ENCODE measurements at regions of chr10 and their contacts with region 1.

Region 1: GRCh38 chr10:80459047-80459931 is 5.2 kb downstream of the TSPAN14 start:
- DNase-seq: peak; percentile 90
- ATAC-seq: peak; percentile 60
- H3K4me3 Mint-ChIP-seq: peak overlapping the region; percentile 86
- H3K27ac Mint-ChIP-seq: peak overlapping the region; percentile 95
- H3K4me1 Mint-ChIP-seq: peaks cover 78% of the 10 kb centered on the region
- H3K27me3 Mint-ChIP-seq: no peaks in the 10 kb centered on the region
- CTCF ChIP-seq: no peak

Region 2: DNA sequence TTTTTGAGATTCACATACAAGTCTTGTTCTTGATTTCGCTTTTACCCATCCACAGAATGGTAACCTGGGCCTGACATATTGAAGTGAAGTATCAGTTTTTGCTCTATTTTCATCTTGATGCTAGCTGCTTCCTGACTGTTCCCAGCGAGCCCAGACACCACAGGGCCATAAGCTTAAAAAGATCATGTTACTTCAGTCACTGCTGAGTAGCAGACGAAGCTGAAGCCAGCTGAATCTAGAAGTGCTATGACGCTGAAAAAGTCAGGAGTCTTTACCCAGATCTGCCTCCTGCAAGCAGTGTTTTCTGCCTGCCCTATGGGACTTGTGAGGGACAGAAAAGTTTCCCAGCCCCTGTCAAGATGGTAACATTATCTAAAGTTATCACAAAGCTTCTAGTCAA is 53.7 kb before region 1 on chr10:
- CTCF ChIA-PET with region 1: no interaction called
- POLR2A ChIA-PET with region 1: no interaction called
- intact Hi-C with region 1: no loop called
- DNase-seq: no peak
- ATAC-seq: no peak
- H3K4me3 Mint-ChIP-seq: no peak overlapping the region
- H3K27ac Mint-ChIP-seq: no peak overlapping the region
- H3K4me1 Mint-ChIP-seq: peaks cover 11% of the 10 kb centered on the region
- H3K27me3 Mint-ChIP-seq: peaks cover 3% of the 10 kb centered on the region
- CTCF ChIP-seq: no peak

Region 3: DNA sequence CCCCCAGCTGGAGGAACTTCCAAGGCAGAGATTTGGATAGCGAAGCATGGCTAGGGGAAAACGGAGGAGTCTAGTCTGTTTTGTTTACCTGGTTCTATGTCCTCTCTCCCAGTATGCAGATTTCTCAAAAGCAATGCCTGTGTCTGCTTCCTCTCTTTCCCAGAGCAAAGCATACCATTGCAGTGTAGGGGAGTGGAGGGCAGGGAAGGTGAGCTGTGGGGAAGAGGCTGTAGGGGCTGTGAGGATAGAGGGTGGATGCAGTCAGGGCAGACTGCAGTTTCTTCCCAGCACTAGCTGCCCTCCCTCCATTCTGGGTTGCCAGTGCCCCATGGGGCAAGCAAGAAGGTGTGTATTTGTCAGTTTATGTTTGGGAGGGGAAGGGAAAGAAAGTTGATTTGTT is 22.1 kb before region 1 on chr10:
- CTCF ChIA-PET with region 1: no interaction called
- POLR2A ChIA-PET with region 1: no interaction called
- intact Hi-C with region 1: no loop called
- DNase-seq: no peak
- ATAC-seq: no peak
- H3K4me3 Mint-ChIP-seq: no peak overlapping the region
- H3K27ac Mint-ChIP-seq: no peak overlapping the region
- H3K4me1 Mint-ChIP-seq: no peaks in the 10 kb centered on the region
- H3K27me3 Mint-ChIP-seq: no peaks in the 10 kb centered on the region
- CTCF ChIP-seq: no peak

Region 4: DNA sequence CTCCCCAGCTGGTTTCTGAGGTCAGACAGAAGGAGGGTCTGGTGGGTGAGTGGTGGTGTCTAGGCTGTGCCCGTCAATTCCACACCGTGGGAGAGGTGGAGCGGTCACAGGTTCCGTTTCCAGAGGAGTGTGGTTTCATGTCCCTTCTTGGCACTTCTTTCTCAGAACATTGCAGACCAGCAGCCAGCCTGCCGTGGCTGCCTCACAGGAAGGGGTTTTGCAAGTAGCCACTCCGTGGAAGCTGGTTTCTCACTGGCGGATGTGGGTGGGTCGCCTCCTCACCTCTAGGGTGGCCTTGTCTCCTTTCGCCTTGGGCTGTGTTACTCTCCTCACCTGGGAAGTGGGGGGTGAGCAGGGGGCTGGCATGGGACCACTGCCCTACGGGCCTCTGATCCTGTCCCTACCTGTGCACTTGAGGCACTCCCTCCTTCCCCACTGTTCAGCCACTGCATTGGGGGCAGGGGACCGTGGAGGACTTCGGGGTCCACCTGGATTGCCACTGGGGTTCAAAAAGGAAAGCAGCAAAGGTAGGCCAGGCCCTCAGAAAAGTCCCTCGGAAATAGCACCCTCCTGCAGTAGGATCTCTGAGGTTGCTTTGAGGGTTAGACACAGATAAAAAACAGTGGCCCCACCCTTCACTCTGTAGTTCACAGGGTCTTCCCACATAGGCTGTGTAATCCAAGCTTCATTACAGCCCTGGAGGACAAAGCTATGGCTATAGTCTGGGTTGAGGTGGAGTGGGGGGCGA is 28.7 kb after region 1 on chr10:
- CTCF ChIA-PET with region 1: interaction called, 27 read pairs
- POLR2A ChIA-PET with region 1: interaction called, 223 read pairs
- intact Hi-C with region 1: no loop called
- DNase-seq: peak; percentile 79
- ATAC-seq: peak; percentile 50
- H3K4me3 Mint-ChIP-seq: peak overlapping the region; percentile 40
- H3K27ac Mint-ChIP-seq: peak overlapping the region; percentile 91
- H3K4me1 Mint-ChIP-seq: peaks cover 93% of the 10 kb centered on the region
- H3K27me3 Mint-ChIP-seq: no peaks in the 10 kb centered on the region
- CTCF ChIP-seq: no peak

Region 5: GRCh38 chr10:80567291-80567690 is 108.0 kb after region 1 on chr10:
- CTCF ChIA-PET with region 1: no interaction called
- POLR2A ChIA-PET with region 1: no interaction called
- intact Hi-C with region 1: no loop called
- DNase-seq: no peak
- ATAC-seq: no peak
- H3K4me3 Mint-ChIP-seq: no peak overlapping the region
- H3K27ac Mint-ChIP-seq: no peak overlapping the region
- H3K4me1 Mint-ChIP-seq: no peaks in the 10 kb centered on the region
- H3K27me3 Mint-ChIP-seq: peaks cover 1% of the 10 kb centered on the region
- CTCF ChIP-seq: no peak

Measured in activated CD8-positive, alpha-beta T cell treated with anti-CD3 and anti-CD28 coated beads for 36 hours (primary cell).